PC-3 (cell line): ENCODE measurements at regions of chr10 and their contacts with region 1.

Region 1: GRCh38 chr10:73263948-73264347 is 11.5 kb upstream of the MRPS16 start:
- DNase-seq: peak; percentile 90
- ATAC-seq: peak; percentile 37
- H3K4me3 ChIP-seq: no peak overlapping the region
- H3K27ac ChIP-seq: no peak overlapping the region
- H3K4me1 ChIP-seq: peaks cover 20% of the 10 kb centered on the region
- H3K27me3 ChIP-seq: no peaks in the 10 kb centered on the region; the same call in 1 of the 2 replicates
- CTCF ChIP-seq: peak; percentile 99

Region 2: GRCh38 chr10:72764151-72764550 is 499.8 kb before region 1 on chr10:
- CTCF ChIA-PET with region 1: no interaction called
- POLR2A ChIA-PET with region 1: no interaction called
- intact Hi-C with region 1: loop called (anchors 10 kb)
- DNase-seq: peak; percentile 87
- ATAC-seq: peak; percentile 74
- H3K4me3 ChIP-seq: no peak overlapping the region
- H3K27ac ChIP-seq: no peak overlapping the region
- H3K4me1 ChIP-seq: peaks cover 11% of the 10 kb centered on the region
- H3K27me3 ChIP-seq: peaks cover 3% of the 10 kb centered on the region; the same call in 1 of the 2 replicates
- CTCF ChIP-seq: no peak

Region 3: GRCh38 chr10:72875250-72876055 is 388.5 kb before region 1 on chr10:
- CTCF ChIA-PET with region 1: no interaction called
- POLR2A ChIA-PET with region 1: no interaction called
- intact Hi-C with region 1: loop called (anchors 1 kb)
- DNase-seq: peak; percentile 98
- ATAC-seq: peak; percentile 86
- H3K4me3 ChIP-seq: no peak overlapping the region
- H3K27ac ChIP-seq: no peak overlapping the region
- H3K4me1 ChIP-seq: peaks cover 3% of the 10 kb centered on the region; the same call in 1 of the 2 replicates
- H3K27me3 ChIP-seq: peaks cover 30% of the 10 kb centered on the region
- CTCF ChIP-seq: peak; percentile 100

Region 4: GRCh38 chr10:73044378-73045285 is 219.3 kb before region 1 on chr10:
- CTCF ChIA-PET with region 1: interaction called, 3 read pairs
- POLR2A ChIA-PET with region 1: no interaction called
- intact Hi-C with region 1: loop called (anchors 5 kb)
- DNase-seq: peak; percentile 100
- ATAC-seq: peak; percentile 86
- H3K4me3 ChIP-seq: peak overlapping the region; percentile 30
- H3K27ac ChIP-seq: peak overlapping the region; percentile 77
- H3K4me1 ChIP-seq: peaks cover 70% of the 10 kb centered on the region
- H3K27me3 ChIP-seq: no peaks in the 10 kb centered on the region
- CTCF ChIP-seq: no peak

Region 5: GRCh38 chr10:73246783-73247508 is 17.0 kb before region 1 on chr10 and contains the start of gene DNAJC9:
- CTCF ChIA-PET with region 1: interaction called, 10 read pairs
- POLR2A ChIA-PET with region 1: interaction called, 16 read pairs
- intact Hi-C with region 1: no loop called
- DNase-seq: peak; percentile 100
- ATAC-seq: peak; percentile 84
- H3K4me3 ChIP-seq: peak within 1 kb of the TSS; percentile 69
- H3K27ac ChIP-seq: peak within 1 kb of the TSS; percentile 80
- H3K4me1 ChIP-seq: peaks cover 50% of the 10 kb centered on the region
- H3K27me3 ChIP-seq: no peaks in the 10 kb centered on the region
- CTCF ChIP-seq: peak; percentile 56
- total RNA-seq, gene DNAJC9: 282 and 283 TPM in 2 replicates

Region 6: GRCh38 chr10:73358331-73359279 is 94.7 kb after region 1 on chr10 and contains the start of gene CFAP70:
- CTCF ChIA-PET with region 1: interaction called, 9 read pairs
- POLR2A ChIA-PET with region 1: interaction called, 5 read pairs
- intact Hi-C with region 1: loop called (anchors 1 kb)
- DNase-seq: peak; percentile 100
- ATAC-seq: peak; percentile 93
- H3K4me3 ChIP-seq: peak within 1 kb of the TSS; percentile 66
- H3K27ac ChIP-seq: no peak within 1 kb of the TSS
- H3K4me1 ChIP-seq: peaks cover 16% of the 10 kb centered on the region
- H3K27me3 ChIP-seq: peaks cover 9% of the 10 kb centered on the region
- CTCF ChIP-seq: no peak
- total RNA-seq, gene CFAP70: 0.73 and 0.92 TPM in 2 replicates

Region 7: DNA sequence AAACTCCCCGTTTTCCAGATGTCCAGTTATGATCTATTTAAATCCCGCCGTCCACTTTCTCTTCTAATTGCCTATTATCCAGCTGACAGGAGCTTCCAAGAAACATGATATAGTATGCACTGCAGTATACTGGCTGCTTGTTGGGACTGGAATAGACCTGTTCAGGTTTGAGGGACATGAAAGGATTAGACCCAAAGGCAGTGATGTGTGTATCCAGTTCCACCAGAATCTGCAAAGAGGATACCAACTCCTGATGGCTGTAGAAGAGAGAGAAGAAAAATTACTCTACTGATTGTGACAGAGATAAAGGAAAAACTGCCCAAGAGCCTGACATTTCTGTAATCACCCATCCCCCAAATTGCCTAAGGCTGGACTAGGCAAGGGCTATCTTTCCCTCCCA is 160.6 kb after region 1 on chr10:
- CTCF ChIA-PET with region 1: no interaction called
- POLR2A ChIA-PET with region 1: no interaction called
- intact Hi-C with region 1: no loop called
- DNase-seq: no peak
- ATAC-seq: no peak
- H3K4me3 ChIP-seq: no peak overlapping the region
- H3K27ac ChIP-seq: no peak overlapping the region
- H3K4me1 ChIP-seq: peaks cover 10% of the 10 kb centered on the region
- H3K27me3 ChIP-seq: no peaks in the 10 kb centered on the region
- CTCF ChIP-seq: no peak